K562 (cell line): ENCODE measurements at regions of chr10 and their contacts with region 1.

Region 1: GRCh38 chr10:79347226-79347893 is at the start of gene PPIF:
- DNase-seq: peak; percentile 95 to 98 (median 96)
- ATAC-seq: peak; percentile 91
- H3K4me3 ChIP-seq: peak within 1 kb of the TSS; percentile 88
- H3K27ac ChIP-seq: peak within 1 kb of the TSS; percentile 96
- H3K4me1 ChIP-seq: peaks cover 37 to 59% of the 10 kb centered on the region in 2 experiments
- H3K27me3 ChIP-seq: no peaks in the 10 kb centered on the region
- CTCF ChIP-seq: peak; percentile 92 to 94 (median 94)
- EP300 ChIP-seq: no peak
- POLR2A ChIP-seq: peak; percentile 72; the same call in 1 of the 2 replicates
- RAD21 ChIP-seq: peak; percentile 68 to 79
- polyA plus RNA-seq, gene PPIF: 40.9 to 51.1 TPM

Region 2: GRCh38 chr10:79292891-79293746 is 54.2 kb before region 1 on chr10:
- CTCF ChIA-PET with region 1: no interaction called
- POLR2A ChIA-PET with region 1: no interaction called
- in situ Hi-C with region 1: no loop called
- intact Hi-C with region 1: loop called (anchors 2 kb)
- DNase-seq: peak; percentile 62 to 93 (median 90)
- ATAC-seq: peak; percentile 95
- H3K4me3 ChIP-seq: no peak overlapping the region
- H3K27ac ChIP-seq: no peak overlapping the region
- H3K4me1 ChIP-seq: peaks cover 0 to 16% of the 10 kb centered on the region in 2 experiments; a peak in 1 of 5 replicates
- H3K27me3 ChIP-seq: no peaks in the 10 kb centered on the region
- CTCF ChIP-seq: peak; percentile 69 to 80 (median 73)
- EP300 ChIP-seq: no peak
- POLR2A ChIP-seq: no peak
- RAD21 ChIP-seq: peak; percentile 33 to 38

Region 3: DNA sequence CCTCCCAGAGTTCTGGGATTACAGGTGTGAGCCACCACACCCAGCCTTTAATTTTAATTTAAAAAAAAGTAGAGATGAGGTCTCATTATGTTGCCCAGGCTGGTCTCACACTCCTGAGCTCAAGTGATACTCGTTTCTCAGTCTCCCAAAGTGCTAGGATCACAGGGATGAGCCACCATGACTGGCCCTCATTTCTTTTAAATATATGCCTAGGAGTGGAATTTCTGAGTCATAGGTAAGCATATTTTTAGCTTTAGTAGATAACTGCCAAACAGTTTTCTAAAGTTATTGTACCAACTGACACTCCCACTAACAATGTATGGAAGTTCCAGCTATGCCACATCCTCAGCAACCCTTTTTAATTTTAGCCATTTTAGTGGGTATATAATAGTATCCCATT is 13.9 kb before region 1 on chr10:
- CTCF ChIA-PET with region 1: no interaction called
- POLR2A ChIA-PET with region 1: interaction called, 16 read pairs
- in situ Hi-C with region 1: no loop called
- intact Hi-C with region 1: no loop called
- DNase-seq: no peak
- ATAC-seq: no peak
- H3K4me3 ChIP-seq: no peak overlapping the region
- H3K27ac ChIP-seq: no peak overlapping the region
- H3K4me1 ChIP-seq: no peaks in the 10 kb centered on the region
- H3K27me3 ChIP-seq: peaks cover 7 to 42% of the 10 kb centered on the region in 2 experiments
- CTCF ChIP-seq: no peak
- EP300 ChIP-seq: no peak
- POLR2A ChIP-seq: no peak
- RAD21 ChIP-seq: no peak

Region 4: DNA sequence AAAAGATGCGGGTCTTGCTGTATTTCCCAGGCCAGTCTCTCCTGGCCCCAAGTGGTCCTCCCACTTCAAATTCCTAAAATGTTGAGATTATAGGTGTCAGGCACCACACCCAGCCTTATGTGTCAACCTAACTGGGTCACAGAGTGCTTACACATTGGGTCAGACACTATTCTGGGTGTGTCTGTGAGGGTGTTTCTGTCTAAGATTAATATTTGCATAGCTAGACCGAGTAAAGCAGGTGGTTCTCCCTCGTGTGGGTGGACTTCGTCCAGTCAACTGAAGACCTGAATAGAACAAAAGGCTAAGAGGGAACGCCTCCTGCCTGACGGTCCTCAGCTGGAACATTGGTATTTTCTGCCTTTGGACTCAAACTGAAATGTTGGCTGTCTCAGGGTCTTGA is 11.4 kb after region 1 on chr10:
- CTCF ChIA-PET with region 1: no interaction called
- POLR2A ChIA-PET with region 1: interaction called, 16 read pairs
- in situ Hi-C with region 1: no loop called
- intact Hi-C with region 1: no loop called
- DNase-seq: peak in 1 of 4 experiments; percentile 9
- ATAC-seq: no peak
- H3K4me3 ChIP-seq: no peak overlapping the region
- H3K27ac ChIP-seq: no peak overlapping the region
- H3K4me1 ChIP-seq: no peaks in the 10 kb centered on the region; a peak in 1 of 5 replicates
- H3K27me3 ChIP-seq: no peaks in the 10 kb centered on the region
- CTCF ChIP-seq: no peak
- EP300 ChIP-seq: no peak
- POLR2A ChIP-seq: no peak
- RAD21 ChIP-seq: no peak